Mammary epithelial cell (primary cell): ENCODE measurements at regions of chr12 and their contacts with region 1.

Region 1: DNA sequence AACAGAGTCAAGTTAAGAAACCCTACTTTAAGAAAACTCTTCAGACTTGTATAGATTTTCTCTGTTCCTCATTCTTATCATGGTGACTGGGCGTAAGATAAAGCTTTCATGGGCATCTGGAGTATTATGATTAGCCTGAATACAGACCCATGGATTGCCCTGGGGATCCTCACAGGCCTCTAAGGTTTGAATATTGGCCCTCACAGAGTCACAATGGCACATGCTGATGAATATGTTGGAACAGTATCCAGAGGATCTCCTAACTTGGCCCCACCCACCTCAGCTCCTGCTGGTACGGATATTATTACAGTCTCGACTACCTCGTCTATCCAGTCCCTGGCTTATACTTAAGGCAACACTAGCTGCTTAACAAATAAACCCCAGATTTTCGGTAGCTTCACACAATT is 8.1 kb downstream of the OSBPL8 start:
- DNase-seq: no peak
- H3K4me3 ChIP-seq: no peak overlapping the region
- H3K27ac ChIP-seq: no peak overlapping the region
- H3K4me1 ChIP-seq: no peaks in the 10 kb centered on the region
- H3K27me3 ChIP-seq: no peaks in the 10 kb centered on the region
- CTCF ChIP-seq: no peak

Region 2: GRCh38 chr12:76508178-76508577 is 43.3 kb before region 1 on chr12:
- CTCF ChIA-PET with region 1: no interaction called
- dilution Hi-C with region 1: no loop called
- in situ Hi-C with region 1: no loop called
- intact Hi-C with region 1: no loop called
- DNase-seq: no peak
- H3K4me3 ChIP-seq: no peak overlapping the region
- H3K27ac ChIP-seq: no peak overlapping the region
- H3K4me1 ChIP-seq: no peaks in the 10 kb centered on the region
- H3K27me3 ChIP-seq: no peaks in the 10 kb centered on the region
- CTCF ChIP-seq: no peak

Region 3: GRCh38 chr12:76519538-76519937 is 31.9 kb before region 1 on chr12:
- CTCF ChIA-PET with region 1: no interaction called
- dilution Hi-C with region 1: loop called (anchors 5 kb)
- in situ Hi-C with region 1: no loop called
- intact Hi-C with region 1: no loop called
- DNase-seq: no peak
- H3K4me3 ChIP-seq: no peak overlapping the region
- H3K27ac ChIP-seq: no peak overlapping the region
- H3K4me1 ChIP-seq: no peaks in the 10 kb centered on the region
- H3K27me3 ChIP-seq: no peaks in the 10 kb centered on the region
- CTCF ChIP-seq: no peak